Ascending aorta (tissue), 2 donors: ENCODE measurements at regions of chr2 and their contacts with region 1.

Region 1: GRCh38 chr2:239401067-239401880 is 454 bp upstream of the HDAC4 start:
- DNase-seq: peak; percentile 98 to 100
- H3K4me3 ChIP-seq: peak overlapping the region; percentile 69 to 85
- H3K27ac ChIP-seq: peak overlapping the region; percentile 98 to 100
- H3K4me1 ChIP-seq: peaks cover 0 to 23% of the 10 kb centered on the region in 2 donors
- H3K27me3 ChIP-seq: no peaks in the 10 kb centered on the region
- CTCF ChIP-seq: peak in 1 of 3 experiments; percentile 0

Region 2: GRCh38 chr2:239143858-239144718 is 257.2 kb before region 1 on chr2:
- intact Hi-C with region 1: loop called (anchors 2 kb)
- DNase-seq: no peak
- H3K4me3 ChIP-seq: no peak overlapping the region
- H3K27ac ChIP-seq: no peak overlapping the region
- H3K4me1 ChIP-seq: peaks cover 0 to 3% of the 10 kb centered on the region in 2 donors
- H3K27me3 ChIP-seq: no peaks in the 10 kb centered on the region
- CTCF ChIP-seq: peak; percentile 53 to 58 (median 54)

Region 3: GRCh38 chr2:239267288-239267951 is 133.9 kb before region 1 on chr2:
- intact Hi-C with region 1: loop called (anchors 5 kb)
- DNase-seq: peak; percentile 70 to 89
- H3K4me3 ChIP-seq: peak overlapping the region in 1 of 2 donors; percentile 14
- H3K27ac ChIP-seq: peak overlapping the region; percentile 81 to 87
- H3K4me1 ChIP-seq: peaks cover 23 to 47% of the 10 kb centered on the region in 2 donors
- H3K27me3 ChIP-seq: no peaks in the 10 kb centered on the region
- CTCF ChIP-seq: peak in 2 of 3 experiments; percentile 38 to 53

Region 4: DNA sequence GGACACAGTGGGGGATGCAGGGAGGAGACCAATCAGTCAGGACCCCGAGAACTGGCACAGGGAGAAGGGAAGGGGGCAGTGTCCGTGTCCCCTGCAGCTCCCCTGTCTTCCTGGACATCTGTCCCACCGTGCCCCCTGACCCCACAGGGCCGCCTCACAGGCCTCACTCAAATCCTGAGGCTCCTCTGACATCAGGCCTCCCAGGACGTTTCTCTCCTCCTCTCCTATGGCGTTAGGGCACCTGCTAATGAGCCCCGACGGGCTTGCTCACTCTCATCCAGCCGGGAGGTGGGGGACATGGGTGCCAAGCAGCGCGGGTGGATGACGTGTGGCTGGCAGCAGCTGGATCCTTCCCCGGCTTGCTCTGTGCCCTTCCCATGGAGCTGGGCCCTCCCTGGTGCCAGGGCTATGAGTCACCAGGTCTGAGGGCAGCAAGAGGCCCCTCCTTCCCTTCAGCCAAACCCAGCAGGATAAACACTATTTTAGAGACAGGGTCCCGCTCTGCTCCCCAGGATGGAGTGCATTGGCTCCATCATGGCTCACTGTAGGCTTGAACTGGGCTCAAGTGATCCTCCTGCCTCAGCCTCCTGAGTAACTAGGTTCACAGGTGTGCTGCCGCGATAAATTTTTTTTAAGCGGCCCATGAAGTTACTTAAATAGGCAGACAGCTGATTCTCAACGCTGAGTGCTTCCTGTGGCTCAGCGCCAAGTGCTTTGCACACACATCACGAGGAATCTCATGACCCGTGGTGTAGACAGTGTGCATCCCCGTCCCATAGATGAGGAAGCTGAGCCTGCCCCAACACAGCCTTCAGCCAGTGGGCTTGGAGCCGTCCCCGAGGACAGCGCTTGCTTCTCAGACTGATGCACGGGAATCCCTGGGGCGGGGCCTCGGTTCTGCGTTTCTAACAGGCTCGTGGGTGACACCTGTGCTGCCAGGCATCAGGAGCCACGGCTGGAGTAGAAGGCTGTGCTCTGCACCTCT is 64.0 kb after region 1 on chr2:
- intact Hi-C with region 1: loop called (anchors 1 kb)
- DNase-seq: peak; percentile 81 to 92
- H3K4me3 ChIP-seq: peak overlapping the region in 1 of 2 donors; percentile 22
- H3K27ac ChIP-seq: peak overlapping the region; percentile 36 to 52
- H3K4me1 ChIP-seq: no peaks in the 10 kb centered on the region
- H3K27me3 ChIP-seq: no peaks in the 10 kb centered on the region
- CTCF ChIP-seq: no peak

Region 5: DNA sequence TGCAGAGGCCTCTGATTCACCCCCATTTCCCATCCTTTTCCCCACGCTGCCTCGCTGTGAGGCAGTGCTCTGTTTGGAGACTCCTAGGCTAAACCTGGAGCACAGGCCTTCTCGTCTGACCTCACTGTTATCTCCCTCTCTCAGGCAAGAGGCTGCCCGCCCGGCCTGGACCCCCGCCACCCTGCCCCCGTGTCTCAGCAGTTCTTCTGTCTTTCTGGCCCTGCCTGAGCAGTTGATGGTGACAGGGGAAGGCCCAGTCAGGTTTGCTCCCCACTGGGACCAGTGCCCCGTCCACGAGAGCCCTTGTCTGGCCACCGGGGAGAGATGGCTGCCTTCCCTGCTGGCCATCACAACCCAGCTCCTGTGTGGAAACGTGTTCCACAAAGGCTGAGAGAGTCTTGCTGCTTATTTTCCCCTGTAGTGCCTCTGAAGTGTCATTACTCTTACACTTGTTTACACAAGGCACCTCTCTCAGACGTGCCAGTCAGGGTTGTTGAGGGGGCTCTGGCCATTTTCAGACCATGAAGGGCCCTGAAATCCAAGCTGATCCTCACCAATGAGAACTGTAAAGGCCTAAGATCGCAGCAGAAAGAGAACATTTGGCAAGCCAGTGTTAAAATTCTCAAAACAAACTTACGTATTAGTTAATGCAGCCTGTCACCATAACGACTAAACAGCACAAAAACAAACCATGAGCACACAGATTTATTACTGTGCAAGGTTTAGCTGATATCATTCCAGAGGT is 413.0 kb after region 1 on chr2:
- intact Hi-C with region 1: loop called (anchors 5 kb)
- DNase-seq: peak in 1 of 2 donors; percentile 75
- H3K4me3 ChIP-seq: peak overlapping the region in 1 of 2 donors; percentile 48
- H3K27ac ChIP-seq: peak overlapping the region; percentile 91 to 96
- H3K4me1 ChIP-seq: peaks cover 22 to 50% of the 10 kb centered on the region in 2 donors
- H3K27me3 ChIP-seq: no peaks in the 10 kb centered on the region
- CTCF ChIP-seq: no peak

Region 6: GRCh38 chr2:240021488-240022104 is 620.3 kb after region 1 on chr2:
- intact Hi-C with region 1: loop called (anchors 5 kb)
- DNase-seq: no peak
- H3K4me3 ChIP-seq: no peak overlapping the region
- H3K27ac ChIP-seq: no peak overlapping the region
- H3K4me1 ChIP-seq: peaks cover 0 to 10% of the 10 kb centered on the region in 2 donors
- H3K27me3 ChIP-seq: no peaks in the 10 kb centered on the region
- CTCF ChIP-seq: peak; percentile 29 to 67 (median 57)

Region 7: GRCh38 chr2:240566203-240567136 is 1165.2 kb after region 1 on chr2:
- intact Hi-C with region 1: loop called (anchors 5 kb)
- DNase-seq: peak; percentile 84 to 97
- H3K4me3 ChIP-seq: peak overlapping the region; percentile 71 to 85
- H3K27ac ChIP-seq: peak overlapping the region; percentile 91 to 96
- H3K4me1 ChIP-seq: peaks cover 16 to 32% of the 10 kb centered on the region in 2 donors
- H3K27me3 ChIP-seq: no peaks in the 10 kb centered on the region
- CTCF ChIP-seq: peak; percentile 59 to 76 (median 71)